Head of caudate nucleus (tissue), 42 donors: ENCODE measurements at regions of chr15 and their contacts with region 1.

Region 1: DNA sequence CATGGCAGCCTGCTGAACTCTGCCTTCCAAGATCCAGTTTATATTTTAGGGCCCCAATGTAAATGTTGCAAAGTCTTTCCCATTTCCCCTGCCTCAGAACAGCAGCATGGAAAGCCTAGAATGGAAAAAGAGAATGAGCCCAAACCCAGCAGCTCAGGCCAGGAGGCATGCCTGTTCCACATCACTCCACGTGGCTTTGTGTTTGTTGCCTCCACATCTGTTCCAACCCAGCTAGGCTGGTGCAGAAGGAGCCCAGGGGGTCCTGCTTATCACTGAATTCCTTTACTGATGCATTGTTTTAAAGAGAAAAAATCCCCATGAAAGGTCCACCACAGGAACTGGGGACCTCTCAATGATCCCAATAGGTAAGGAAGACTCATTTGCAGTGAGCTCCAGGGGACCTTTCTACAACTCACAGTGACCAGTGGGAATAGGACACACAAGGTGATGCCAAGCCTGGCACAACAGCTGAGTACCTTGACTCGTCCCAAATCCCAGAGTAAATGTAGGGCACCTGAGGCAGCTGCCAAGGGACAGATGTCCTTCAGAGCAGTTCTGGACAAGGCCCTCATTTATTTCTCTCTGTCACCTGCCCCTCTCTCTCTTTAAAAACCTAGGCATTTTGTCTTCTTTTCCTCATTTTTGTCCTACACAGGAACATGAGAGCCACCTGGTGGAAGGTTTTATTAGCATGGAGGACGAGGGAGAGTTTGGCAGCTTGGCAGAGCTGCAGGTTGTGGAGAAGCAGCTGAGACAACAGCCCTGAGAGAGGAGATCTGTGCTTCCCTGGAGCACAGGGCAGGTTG is 41.7 kb upstream of the ADAMTS17 start:
- DNase-seq: peak in 12 of 42 donors; percentile 4 to 55 (median 16)

Region 2: DNA sequence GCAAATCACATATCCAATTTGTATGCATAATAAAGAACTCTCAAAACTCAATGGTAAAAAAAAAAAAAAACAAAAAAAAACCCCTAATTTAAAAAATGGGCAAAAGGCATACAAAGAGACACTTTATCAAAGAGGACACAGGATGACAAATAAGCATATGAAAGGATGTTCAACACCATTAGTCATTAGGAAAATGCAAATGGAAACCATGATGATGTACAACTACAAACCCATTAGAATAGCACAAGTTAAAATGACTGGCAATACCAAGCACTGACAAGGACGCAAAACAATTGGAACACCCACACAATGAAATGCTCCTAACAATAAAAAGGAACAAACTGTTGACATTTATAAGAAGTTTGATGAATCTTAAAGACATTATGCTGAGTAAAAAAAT is 21.7 kb after region 1 on chr15:
- intact Hi-C with region 1: loop called (anchors 2 kb)
- DNase-seq: no peak

Region 3: DNA sequence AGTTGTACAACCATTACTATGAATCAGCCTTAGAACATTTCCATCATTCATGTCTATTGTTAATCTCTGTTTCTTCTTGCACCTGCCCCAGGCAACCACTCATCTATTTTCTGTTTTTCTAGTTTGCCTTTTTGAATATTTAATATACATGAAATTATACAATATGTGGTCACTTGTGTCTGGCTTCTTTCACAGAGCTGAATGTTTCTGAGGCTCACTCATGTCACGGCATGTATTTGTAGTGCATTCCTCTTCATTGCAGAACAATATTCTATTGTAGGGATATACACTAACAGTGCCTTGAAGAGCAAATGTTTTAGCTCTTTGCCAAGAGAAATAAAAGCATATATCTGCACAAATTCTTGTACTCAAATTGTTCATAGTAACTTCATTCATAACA is 112.4 kb after region 1 on chr15:
- intact Hi-C with region 1: no loop called
- DNase-seq: no peak